ENCODE measurements at regions of chr9 and their contacts with region 1.

Region 1: DNA sequence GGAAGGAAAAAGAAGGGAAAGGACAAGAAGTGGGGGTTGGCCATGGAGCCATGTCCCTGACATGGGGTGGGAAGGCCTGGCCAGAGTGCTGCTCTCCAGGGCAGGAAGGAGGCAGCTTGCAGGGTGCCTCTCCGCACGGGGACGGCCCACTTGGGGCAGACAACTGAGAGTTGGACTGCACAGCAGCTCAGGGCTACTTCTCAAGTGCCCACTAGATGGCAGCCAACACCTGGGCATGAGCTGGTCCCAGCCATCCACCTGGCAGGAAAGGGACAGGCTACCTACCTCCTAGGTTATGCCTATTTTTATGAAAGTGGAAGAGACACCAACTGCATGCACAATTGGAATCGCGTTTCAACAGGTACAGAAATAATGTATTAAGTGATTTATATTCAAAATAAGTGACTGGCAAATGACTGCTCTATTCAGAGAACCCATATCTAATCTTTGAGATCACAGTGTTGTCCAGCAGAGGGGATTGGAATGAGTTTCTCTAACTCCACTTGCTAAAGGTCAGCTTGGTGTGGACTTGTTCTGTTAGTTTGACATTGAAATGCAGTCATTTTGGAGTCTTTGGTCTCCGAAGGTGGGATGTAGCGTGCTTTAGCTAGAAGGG is 113.4 kb downstream of the SYK start:
- DNase-seq: peak; percentile 76
- H3K4me3 ChIP-seq: no peak overlapping the region
- H3K27ac ChIP-seq: no peak overlapping the region
- H3K4me1 ChIP-seq: peaks cover 3% of the 10 kb centered on the region
- H3K27me3 ChIP-seq: no peaks in the 10 kb centered on the region
- CTCF ChIP-seq: peak; percentile 87 to 97 (median 91)
- POLR2A ChIP-seq: no peak

Region 2: DNA sequence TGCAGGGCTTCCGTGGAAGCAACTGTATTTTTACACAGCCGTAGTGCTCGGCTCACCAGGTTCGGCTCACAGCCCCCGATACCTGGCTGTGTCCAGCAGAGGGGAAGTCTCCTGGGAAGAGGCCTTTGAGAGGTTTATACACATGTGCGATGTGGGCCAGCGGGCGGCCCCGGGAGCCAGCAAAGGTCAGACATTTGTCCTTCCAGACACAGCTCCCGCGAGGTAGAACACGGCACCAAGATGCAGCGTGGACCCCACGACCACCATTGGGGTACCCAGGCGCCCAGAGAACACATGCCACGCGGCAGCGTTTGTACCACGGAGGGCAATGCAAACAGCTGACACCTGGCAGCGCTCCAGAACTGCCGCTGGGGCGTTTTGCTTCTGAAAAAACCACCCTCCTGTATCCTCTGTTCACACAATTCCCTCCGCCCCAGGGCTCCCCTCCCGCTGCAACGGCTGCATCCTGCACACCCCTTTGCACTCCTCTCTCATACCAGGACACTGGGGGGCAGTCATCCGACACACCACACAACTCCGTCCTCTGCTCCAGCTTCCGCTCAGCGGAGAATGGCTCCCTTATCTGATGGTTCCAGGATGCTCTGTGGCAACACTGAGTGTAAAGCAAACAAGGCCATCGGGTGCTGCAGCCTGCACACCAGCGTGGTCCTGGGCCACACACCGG is 122.0 kb after region 1 on chr9:
- intact Hi-C with region 1: loop called (anchors 5 kb)
- DNase-seq: peak; percentile 86
- H3K4me3 ChIP-seq: no peak overlapping the region
- H3K27ac ChIP-seq: peak overlapping the region; percentile 17 to 42
- H3K4me1 ChIP-seq: no peaks in the 10 kb centered on the region
- H3K27me3 ChIP-seq: no peaks in the 10 kb centered on the region
- CTCF ChIP-seq: peak in 3 of 4 experiments; percentile 61 to 81 (median 74)
- POLR2A ChIP-seq: no peak

Region 3: DNA sequence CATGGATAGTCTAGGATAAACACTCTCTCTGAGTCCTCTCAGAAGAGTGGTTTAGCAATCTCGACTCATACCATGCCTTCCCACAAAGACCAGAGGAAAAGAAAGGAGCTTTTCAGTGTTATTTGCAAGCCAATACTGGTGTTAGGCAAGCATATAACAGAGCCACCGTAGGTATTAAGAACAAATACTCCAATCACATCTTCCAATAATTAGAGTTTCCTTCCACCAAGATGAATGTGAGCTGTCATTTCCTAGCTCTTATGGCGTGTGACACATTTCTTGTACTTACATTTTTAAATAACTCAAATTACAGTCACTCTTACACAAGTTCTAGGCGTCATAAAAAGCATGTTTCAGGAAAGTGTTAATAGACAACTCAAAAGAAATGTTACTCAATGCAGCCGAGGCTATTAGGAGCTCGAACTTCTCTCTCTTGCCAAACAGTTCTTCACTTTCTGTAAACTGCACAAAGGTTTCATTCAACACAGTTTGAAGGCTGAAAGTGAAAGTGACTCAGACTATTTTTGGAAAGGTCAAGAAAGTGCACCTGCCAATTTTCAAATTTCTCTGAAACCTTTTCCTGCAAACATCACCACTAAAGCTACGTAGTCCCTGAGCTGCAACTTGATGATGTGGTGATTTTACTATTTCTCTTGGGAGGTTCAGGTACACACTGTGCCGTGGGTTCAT is 292.9 kb after region 1 on chr9:
- intact Hi-C with region 1: loop called (anchors 10 kb)
- DNase-seq: no peak
- H3K4me3 ChIP-seq: no peak overlapping the region
- H3K27ac ChIP-seq: peak overlapping the region; percentile 71 to 78
- H3K4me1 ChIP-seq: no peaks in the 10 kb centered on the region
- H3K27me3 ChIP-seq: no peaks in the 10 kb centered on the region
- CTCF ChIP-seq: no peak
- POLR2A ChIP-seq: no peak

Region 4: DNA sequence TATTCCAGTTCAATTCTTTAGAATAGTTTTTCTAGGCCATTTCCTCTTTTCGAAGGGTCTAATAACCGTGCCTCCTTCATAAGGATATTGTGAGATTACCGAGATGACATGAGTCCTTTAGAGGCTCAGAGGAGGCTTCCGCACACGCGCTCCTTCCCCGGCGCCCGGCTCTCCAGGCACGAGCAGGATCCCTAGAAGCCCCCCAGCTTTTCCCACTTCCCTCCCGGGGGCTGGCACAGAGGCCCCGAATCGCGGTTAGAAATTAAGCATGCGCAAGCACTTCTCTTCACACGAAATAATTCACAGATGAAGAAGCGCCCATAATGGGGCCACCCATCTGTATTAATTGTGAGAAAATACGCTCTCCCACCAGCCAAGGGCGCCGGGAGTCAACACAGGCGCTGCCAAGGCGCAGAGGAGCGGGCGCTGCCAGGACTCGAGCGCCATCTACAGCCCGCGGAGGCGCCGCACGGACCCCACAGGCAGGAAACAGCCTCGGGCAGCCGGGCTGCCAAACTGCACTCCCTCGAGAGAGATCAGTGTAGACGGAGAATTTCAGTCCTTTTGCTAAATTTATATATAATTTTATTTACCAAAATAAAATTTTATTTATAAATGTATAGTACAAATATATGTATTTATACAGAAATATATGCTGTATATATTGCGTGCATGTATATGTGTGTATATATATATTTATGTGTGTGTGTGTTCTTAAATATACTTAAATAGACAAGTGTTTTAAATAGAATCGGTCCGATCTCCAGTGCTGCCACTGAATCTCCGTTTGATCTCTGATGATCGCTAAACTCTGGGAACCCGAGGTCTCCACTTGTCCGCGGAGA is 766.7 kb after region 1 on chr9:
- intact Hi-C with region 1: loop called (anchors 5 kb)
- DNase-seq: peak; percentile 54
- H3K4me3 ChIP-seq: no peak overlapping the region
- H3K27ac ChIP-seq: no peak overlapping the region
- H3K4me1 ChIP-seq: peaks cover 5% of the 10 kb centered on the region
- H3K27me3 ChIP-seq: no peaks in the 10 kb centered on the region
- CTCF ChIP-seq: peak; percentile 27 to 82 (median 65)
- POLR2A ChIP-seq: no peak

Region 5: DNA sequence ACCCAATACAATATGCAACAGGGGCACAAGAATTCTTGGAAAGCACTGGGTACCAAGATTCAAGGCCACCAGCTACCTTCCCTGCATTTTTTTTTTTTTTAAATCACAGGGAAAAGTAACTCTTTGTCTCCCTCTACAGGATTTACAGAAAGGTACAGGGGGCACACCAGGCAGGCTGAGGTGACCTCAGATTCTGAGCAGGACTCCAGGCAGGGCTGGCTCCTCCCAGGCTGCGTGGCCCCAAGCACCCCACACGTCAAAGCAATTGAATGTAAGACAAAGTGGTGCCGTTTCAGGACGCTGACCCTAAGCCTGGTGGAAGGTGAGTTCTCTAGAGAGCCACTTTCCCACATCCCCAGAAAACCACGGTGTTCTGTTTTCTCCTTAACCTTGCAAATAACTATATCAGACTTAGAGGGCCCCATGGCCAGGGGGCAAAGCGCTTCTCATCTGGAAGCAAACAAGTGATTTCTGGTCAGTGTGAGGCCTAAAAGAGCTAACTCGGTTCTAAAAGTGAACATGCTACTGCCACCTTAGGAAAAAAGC is 812.4 kb after region 1 on chr9:
- intact Hi-C with region 1: loop called (anchors 5 kb)
- DNase-seq: no peak
- H3K4me3 ChIP-seq: no peak overlapping the region
- H3K27ac ChIP-seq: no peak overlapping the region
- H3K4me1 ChIP-seq: peaks cover 3% of the 10 kb centered on the region
- H3K27me3 ChIP-seq: no peaks in the 10 kb centered on the region
- CTCF ChIP-seq: peak in 3 of 4 experiments; percentile 47 to 55 (median 47)
- POLR2A ChIP-seq: no peak

Measured in prostate gland (tissue), 2 donors.